ENCODE measurements at regions of chr5 and their contacts with region 1.

Region 1: DNA sequence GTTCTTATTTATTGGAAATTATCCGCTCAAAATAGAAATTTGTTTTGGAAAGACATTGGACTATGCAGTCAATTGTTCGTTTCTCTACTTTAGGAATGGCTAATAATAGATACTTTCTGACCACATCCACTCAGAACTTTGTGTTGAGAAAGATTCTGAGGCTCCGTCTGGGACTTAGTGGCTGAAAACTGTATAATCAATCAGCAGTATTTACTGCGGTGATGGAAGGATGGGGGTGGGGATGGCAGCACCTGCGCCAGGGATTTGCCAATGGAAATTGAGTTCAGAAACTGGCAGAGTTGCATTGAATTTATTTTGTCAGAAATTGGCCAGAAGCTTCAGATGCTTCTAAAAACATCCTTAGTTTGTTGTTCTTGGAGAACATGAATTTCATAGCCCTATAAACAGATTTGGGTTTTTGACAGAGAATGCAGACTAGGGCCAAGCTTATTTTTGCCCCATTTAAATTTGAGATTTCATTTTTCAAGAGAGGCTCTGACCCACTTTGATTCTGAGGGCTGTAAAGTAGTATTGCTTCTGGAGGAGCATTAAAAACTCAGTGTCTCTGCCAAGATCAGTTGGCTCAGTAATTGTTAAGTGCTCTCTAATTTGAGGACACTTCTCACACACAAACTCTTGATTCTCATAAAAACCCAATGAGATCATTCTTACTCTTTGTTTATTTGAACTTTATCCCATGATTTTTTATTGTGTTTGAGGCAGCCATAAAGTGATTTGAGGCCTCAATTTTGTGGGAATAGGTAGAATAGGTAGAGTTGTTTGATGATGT is 215.1 kb downstream of the CD180 start:
- DNase-seq: no peak
- H3K4me3 ChIP-seq: no peak overlapping the region
- H3K27ac ChIP-seq: no peak overlapping the region
- H3K4me1 ChIP-seq: no peaks in the 10 kb centered on the region
- H3K27me3 ChIP-seq: no peaks in the 10 kb centered on the region
- CTCF ChIP-seq: no peak

Region 2: GRCh38 chr5:66933066-66933465 is 48.4 kb before region 1 on chr5:
- CTCF ChIA-PET with region 1: no interaction called
- dilution Hi-C with region 1: loop called (anchors 5 kb)
- in situ Hi-C with region 1: no loop called
- intact Hi-C with region 1: no loop called
- DNase-seq: peak; percentile 81
- H3K4me3 ChIP-seq: no peak overlapping the region
- H3K27ac ChIP-seq: peak overlapping the region; percentile 77
- H3K4me1 ChIP-seq: peaks cover 19% of the 10 kb centered on the region
- H3K27me3 ChIP-seq: no peaks in the 10 kb centered on the region
- CTCF ChIP-seq: no peak

Region 3: DNA sequence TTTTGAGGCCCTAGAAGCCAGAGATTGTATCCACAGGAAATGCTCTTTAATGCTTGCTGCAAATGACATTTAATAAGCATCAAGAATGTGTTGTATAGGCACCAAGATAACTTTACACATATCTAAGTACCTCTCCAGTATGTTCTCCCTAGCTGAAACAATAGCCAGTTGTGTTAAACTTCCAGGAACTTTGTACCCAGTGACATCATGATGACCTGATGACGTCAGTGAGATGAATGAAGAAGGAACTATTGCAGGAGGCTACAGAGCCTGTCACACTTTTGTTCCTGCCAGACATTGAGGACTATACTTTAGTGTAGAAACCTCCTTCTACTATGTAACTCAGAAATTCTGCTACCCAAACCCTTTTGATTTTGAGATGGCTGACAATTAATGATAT is 85.4 kb after region 1 on chr5:
- CTCF ChIA-PET with region 1: no interaction called
- dilution Hi-C with region 1: no loop called
- in situ Hi-C with region 1: no loop called
- intact Hi-C with region 1: no loop called
- DNase-seq: peak; percentile 29
- H3K4me3 ChIP-seq: no peak overlapping the region
- H3K27ac ChIP-seq: no peak overlapping the region
- H3K4me1 ChIP-seq: peaks cover 2% of the 10 kb centered on the region
- H3K27me3 ChIP-seq: no peaks in the 10 kb centered on the region
- CTCF ChIP-seq: no peak

Measured in mammary epithelial cell (primary cell).